Activated T-helper 1 cell treated with anti-CD3 and anti-CD28 coated beads, Interleukin-12 subunit alpha, Interleukin-12 subunit beta, Interleukin-2, Interleukin-4 antibody, amounts not matched to agents 30 ng/mL and 10 ng/mL and 1 ng/mL, durations not matched to agents 14 hours and 24 hours and 36 hours (primary cell): ENCODE measurements at regions of chr5 and their contacts with region 1.

Region 1: DNA sequence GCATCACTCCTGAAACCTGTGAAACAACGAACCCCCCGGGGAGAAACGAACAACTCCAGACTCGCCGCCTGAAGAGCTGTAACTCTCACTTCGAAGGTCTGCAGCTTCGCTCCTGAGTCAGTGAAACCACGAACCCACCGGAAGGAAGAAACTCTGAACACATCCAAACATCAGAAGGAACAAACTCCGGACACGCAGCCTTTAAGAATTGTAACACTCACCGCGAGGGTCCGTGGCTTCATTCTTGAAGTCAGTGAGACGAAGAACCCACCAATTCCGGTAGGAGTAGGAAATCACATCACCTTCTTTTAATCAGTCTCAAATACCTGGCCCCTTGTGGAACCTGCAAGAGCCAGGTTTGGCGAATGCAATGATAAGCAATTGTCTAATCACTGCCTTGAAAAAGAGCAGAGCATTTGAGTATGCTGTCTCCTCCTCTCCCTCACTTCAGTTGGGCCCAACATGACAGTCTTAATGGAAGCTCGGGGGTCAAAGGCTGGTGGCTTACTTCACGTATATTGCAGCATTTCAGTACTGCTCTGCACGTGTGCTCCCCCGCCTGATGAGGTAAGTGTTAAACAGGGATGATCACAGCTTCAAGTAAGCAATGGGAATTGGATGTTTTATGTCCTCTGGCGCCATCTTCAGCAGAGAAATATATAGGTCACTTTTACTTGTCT is 473 bp downstream of the IRGM start:
- DNase-seq: peak; percentile 54
- H3K4me3 Mint-ChIP-seq: peak overlapping the region; percentile 79
- H3K27ac Mint-ChIP-seq: peak overlapping the region; percentile 70
- H3K4me1 Mint-ChIP-seq: peaks cover 19% of the 10 kb centered on the region
- H3K27me3 Mint-ChIP-seq: no peaks in the 10 kb centered on the region

Region 2: DNA sequence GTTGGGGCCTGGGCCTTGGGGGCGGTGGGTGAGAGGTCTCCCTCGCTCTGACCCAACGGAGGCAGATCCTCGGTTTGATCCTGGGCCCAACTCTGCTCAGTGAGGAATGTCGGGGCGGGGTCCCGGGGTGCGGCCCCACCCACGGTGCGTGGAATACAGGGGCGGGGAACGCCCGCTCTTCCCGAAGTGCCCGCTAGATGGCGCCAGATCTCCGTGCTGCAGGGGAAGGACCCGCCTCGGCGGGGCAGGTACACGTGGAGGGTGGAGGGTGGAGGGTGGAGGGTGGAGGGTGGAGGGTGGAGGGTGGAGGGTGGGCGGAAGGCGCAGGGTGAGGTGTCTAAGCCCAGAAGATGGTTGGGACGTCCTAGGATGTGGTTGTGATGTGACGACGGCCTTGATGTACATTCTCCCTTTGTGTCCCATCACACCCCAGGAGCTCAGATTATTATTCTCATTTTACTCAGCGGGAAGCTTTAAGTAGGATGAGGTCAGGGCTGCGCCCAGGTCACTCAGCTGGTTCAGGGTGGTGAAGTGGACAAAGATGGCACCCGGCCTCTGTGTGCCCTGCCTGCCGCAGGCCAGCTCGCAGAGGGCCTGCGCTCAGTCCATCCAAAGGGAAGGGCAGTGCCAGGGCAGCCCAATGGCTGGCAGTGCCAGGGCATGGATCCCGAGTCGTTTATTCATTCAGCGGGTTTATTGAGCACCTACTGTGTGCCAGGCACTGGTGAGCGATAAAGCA is 387.8 kb before region 1 on chr5:
- intact Hi-C with region 1: loop called (anchors 1 kb)
- DNase-seq: peak; percentile 75
- H3K4me3 Mint-ChIP-seq: no peak overlapping the region
- H3K27ac Mint-ChIP-seq: no peak overlapping the region
- H3K4me1 Mint-ChIP-seq: peaks cover 19% of the 10 kb centered on the region
- H3K27me3 Mint-ChIP-seq: peaks cover 1% of the 10 kb centered on the region

Region 3: DNA sequence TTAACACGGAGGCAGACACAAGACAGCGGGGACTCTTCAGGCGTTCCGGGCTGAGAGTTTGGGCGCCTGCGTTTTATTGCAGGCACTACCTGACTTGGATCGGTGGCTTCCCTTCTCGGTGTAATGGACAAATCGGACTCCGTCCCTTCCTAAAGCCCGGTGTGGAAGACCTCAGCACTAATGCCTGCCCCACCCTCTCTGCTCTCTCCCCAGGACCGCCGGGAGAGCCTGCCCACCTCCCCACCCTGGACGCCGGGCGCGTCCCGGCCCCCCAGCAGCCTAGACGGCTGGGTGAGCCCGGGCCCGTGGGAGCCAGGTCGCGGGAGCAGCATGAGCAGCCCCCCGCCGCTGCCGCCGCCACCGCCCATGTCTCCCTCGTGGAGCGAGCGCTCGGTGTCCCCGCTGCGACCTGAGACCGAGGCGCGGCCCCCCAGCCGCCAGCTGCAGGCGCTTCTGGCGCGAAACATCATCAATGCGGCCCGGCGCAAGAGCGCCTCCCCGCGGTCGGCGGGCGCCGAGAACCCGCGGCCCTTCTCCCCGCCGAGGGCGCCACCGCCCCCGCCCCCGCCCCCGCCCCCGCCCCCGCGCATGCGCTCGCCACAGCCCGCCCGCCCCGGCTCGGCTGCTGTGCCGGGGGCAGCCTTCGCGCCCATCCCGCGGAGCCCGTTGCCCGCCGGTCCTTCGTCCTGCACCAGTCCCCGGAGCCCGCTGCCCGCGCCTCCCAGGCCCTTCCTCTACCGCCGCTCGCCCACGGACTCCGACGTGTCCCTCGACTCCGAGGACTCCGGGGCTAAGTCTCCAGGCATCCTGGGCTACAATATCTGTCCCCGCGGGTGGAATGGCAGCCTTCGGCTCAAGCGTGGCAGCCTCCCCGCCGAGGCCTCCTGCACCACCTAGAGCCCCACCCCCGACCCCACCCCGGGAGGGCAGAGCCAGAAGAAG is 190.3 kb before region 1 on chr5:
- intact Hi-C with region 1: loop called (anchors 1 kb)
- DNase-seq: peak; percentile 74
- H3K4me3 Mint-ChIP-seq: peak overlapping the region; percentile 64
- H3K27ac Mint-ChIP-seq: no peak overlapping the region
- H3K4me1 Mint-ChIP-seq: peaks cover 7% of the 10 kb centered on the region
- H3K27me3 Mint-ChIP-seq: peaks cover 21% of the 10 kb centered on the region

Region 4: GRCh38 chr5:150758531-150759333 is 88.1 kb before region 1 on chr5 and contains the start of gene DCTN4:
- intact Hi-C with region 1: loop called (anchors 1 kb)
- DNase-seq: peak; percentile 90
- H3K4me3 Mint-ChIP-seq: no peak within 1 kb of the TSS
- H3K27ac Mint-ChIP-seq: no peak within 1 kb of the TSS
- H3K4me1 Mint-ChIP-seq: peaks cover 34% of the 10 kb centered on the region
- H3K27me3 Mint-ChIP-seq: peaks cover 2% of the 10 kb centered on the region
- total RNA-seq, gene DCTN4: 42.3 and 46.4 TPM in 2 replicates

Region 5: DNA sequence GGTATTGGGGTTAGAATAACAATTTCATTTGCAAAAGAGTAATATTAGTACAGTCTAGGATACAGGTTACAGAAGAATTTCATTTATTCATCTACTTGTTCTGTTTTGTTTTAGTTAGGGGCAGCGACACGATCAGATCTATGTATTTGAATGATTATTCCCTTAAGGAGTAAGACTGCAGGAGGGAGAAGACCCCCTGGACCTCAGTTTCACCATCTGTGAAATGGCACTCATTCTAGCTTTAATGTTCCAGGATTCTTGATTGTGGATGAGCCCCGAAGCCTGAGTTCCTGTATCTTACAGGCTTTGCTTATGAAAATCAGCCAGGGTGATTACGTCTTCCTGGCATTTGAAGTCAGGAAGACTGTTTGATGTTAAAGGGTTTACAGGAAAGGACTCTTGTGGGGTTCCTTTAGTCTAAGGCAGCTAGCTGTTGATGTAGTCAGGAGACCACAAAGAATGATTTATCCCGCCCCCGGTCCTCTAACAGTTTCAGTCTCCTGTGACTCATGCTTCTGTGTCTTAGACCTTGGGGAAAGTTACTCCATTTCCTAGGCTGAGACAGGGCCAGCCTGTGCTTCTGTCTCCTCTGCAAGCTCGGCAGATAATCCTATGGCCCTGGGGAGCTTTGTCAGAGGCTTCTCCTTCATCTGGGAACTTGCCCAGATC is 56.7 kb before region 1 on chr5:
- intact Hi-C with region 1: loop called (anchors 1 kb)
- DNase-seq: peak; percentile 63
- H3K4me3 Mint-ChIP-seq: peak overlapping the region; percentile 78
- H3K27ac Mint-ChIP-seq: peak overlapping the region; percentile 87
- H3K4me1 Mint-ChIP-seq: peaks cover 59% of the 10 kb centered on the region
- H3K27me3 Mint-ChIP-seq: no peaks in the 10 kb centered on the region

Region 6: DNA sequence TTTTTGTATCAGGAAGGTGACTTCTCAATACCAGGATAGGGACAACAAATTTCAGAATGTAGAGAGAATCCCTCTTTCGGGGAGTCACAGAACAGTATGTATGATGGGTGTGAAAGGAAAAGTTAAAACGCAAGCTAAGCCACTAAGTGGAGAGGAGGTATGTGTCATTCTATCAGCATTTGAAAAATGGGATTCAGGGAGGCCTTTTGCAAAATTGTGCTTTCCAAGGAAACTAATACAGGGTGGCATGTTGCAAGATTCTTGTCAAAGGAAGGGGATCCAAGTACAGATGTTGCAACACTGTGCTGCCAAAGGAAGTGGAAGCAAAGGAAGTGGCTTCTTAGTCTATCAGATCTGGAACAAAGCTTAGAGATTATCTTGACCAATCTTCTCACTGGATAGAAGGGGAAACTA is 246.7 kb after region 1 on chr5:
- intact Hi-C with region 1: loop called (anchors 10 kb)
- DNase-seq: no peak
- H3K4me3 Mint-ChIP-seq: peak overlapping the region; percentile 67
- H3K27ac Mint-ChIP-seq: peak overlapping the region; percentile 82
- H3K4me1 Mint-ChIP-seq: peaks cover 80% of the 10 kb centered on the region
- H3K27me3 Mint-ChIP-seq: no peaks in the 10 kb centered on the region

Region 7: DNA sequence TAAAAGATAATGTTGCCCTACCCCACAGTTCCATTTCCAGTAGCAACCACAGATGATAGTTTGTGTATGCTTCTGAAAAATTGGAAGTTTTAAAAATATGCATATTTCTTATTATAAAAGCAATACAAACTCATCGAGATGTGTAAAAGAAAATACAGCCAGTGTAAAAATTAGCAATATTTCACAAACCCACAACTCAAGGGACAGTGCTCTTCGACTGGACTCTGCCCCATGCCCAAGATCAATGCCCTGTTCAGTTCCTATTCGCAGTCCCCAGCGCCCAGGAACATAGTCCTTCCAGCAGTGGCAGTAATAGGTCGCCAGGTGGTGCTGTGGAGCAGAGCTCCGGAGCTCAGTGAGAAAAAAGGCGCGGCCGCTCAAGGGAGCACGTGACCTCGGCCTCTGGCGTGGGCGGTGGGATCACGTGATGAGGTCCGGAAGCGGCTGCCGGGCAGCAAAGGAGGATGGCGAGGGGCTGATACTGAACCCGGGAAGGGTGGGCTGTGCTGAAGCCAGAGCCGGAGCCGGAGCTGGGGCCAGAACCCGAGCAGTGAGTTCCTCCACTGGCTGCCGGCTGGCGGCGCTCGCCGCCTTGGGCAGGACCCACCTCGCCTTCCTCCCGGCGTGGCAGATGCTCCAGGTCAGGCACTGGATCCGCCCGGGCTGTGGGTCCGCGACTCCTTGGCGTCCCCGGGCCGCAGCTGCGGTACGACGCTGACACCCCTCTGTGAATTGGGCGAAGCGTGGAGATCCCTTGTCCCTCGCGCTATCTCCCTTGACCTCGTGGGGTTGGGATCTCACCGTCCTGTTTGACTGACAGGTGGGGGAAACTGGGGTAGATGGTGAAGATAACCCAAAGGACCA is 600.6 kb after region 1 on chr5 and contains the start of gene SLC36A1:
- intact Hi-C with region 1: loop called (anchors 2 kb)
- DNase-seq: peak; percentile 88
- H3K4me3 Mint-ChIP-seq: peak within 1 kb of the TSS; percentile 98
- H3K27ac Mint-ChIP-seq: peak within 1 kb of the TSS; percentile 96
- H3K4me1 Mint-ChIP-seq: peaks cover 31% of the 10 kb centered on the region
- H3K27me3 Mint-ChIP-seq: peaks cover 25% of the 10 kb centered on the region
- total RNA-seq, gene SLC36A1: 5.8 and 7.9 TPM in 2 replicates